ENCODE measurements at regions of chr9 and their contacts with region 1.

Region 1: DNA sequence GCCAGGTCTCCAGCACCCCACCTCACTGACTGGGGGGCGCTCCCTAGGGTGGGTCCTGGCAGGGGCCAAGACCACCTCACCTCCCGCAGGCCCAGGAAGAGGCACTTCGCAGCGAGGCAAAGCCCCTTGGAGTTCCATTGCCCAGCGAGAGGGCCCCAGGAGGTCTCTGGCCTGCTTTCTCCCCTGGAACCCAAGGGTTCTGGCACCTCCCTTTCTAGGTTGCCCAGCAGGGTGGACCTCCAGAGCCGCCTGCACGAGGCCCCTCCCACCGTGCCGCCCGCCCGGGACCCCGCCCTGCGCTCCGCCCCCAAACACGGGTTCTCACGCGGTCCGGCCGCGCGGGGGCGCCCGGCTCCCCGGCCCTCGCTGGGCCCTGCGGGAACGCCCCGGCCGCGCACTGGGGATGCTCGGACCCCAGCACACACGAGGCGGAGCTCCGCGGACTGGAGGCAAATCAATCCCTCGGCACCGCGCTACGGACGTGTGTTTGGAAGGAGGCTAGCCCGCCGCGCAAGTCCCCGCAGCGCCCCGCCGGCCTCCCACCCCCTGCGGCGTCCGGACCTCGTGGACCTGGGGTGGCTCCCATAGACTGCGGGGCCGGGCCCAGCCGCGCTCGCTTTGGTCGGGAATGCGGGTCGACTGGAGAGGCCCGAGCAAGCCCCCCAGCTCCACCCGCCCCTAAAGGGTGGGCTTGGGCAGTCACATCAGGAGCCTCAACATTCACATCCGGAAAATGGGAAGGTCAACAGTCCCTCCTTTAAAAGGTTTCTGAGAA is 99.5 kb upstream of the LMX1B start:
- DNase-seq: peak; percentile 63
- H3K4me3 Mint-ChIP-seq: no peak overlapping the region
- H3K27ac Mint-ChIP-seq: no peak overlapping the region
- H3K4me1 Mint-ChIP-seq: peaks cover 19% of the 10 kb centered on the region
- H3K27me3 Mint-ChIP-seq: peaks cover 95% of the 10 kb centered on the region

Region 2: DNA sequence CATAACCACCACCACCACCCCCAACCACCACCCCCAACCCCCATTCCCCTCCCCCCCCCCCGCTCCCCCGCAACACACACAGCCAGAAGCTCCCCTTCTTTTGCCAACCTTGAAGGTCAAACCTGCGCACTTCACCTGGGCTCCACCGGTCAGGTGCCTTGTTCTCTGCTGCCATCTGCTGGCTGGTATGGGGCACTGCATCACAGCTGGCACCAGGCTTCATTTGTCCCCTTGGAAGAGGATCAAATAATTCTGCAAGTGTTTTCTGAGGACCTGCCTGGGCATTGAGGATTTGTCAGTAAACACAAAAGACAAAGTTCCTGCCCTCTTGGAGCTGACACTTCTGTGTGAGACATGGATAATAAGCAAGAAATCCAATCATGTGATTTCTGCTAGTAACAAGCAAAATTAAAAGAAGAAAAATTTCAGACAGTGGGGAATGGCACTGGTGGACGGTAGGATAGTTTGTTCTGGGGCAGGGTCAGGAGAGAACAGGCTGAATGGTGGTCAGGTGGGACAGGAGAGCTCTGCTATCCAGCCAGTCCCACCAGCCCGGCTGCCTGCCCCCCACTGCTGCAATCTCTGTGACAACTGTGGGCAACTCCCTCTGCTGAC is 43.9 kb after region 1 on chr9:
- CTCF ChIA-PET with region 1: interaction called, 12 read pairs
- DNase-seq: peak; percentile 75
- H3K4me3 Mint-ChIP-seq: no peak overlapping the region
- H3K27ac Mint-ChIP-seq: no peak overlapping the region
- H3K4me1 Mint-ChIP-seq: no peaks in the 10 kb centered on the region
- H3K27me3 Mint-ChIP-seq: peaks cover 27% of the 10 kb centered on the region

Measured in activated naive CD4-positive, alpha-beta T cell treated with anti-CD3 and anti-CD28 coated beads, Interleukin-2, amount 10 ng/mL, durations not matched to agents 7 days and 5 days (primary cell).